ENCODE measurements at regions of chr11 and their contacts with region 1.

Region 1: DNA sequence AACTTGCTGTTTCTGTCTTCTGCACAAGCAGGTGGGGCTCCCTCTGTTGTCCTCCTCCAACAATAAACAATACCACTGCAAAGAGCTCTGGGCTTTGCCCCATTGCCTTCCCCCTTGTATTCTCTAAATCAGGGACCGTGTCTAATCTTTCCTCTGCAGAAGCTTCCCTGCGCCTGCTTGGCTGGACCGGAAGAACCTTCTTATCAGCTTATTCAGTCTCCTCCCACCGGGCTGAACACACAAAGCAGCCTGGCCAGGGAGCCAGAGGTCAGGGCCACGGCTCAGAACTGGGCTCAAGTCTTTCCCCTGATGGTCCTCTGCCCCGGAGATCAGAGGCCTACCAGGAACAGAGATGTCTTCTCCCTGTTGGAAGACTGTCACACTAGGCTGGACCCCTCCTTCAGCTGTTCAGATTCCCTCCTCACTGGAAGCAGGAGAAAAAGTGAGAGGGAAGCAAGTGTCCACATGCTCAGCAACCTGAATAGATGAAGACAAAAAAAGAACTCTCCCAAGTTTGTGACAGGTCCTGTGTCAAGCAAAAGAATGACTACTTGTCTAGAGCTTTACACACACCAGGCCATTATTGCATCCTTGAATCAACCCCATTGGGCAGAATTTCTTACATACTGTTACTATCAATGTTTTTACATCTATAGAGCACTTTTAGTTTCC is 63.7 kb downstream of the RAB30 start:
- DNase-seq: no peak
- H3K4me3 Mint-ChIP-seq: no peak overlapping the region
- H3K27ac Mint-ChIP-seq: no peak overlapping the region
- H3K4me1 Mint-ChIP-seq: peaks cover 57% of the 10 kb centered on the region
- H3K27me3 Mint-ChIP-seq: no peaks in the 10 kb centered on the region

Region 2: GRCh38 chr11:82959987-82960778 is 47.9 kb before region 1 on chr11:
- intact Hi-C with region 1: loop called (anchors 1 kb)
- DNase-seq: peak; percentile 42
- H3K4me3 Mint-ChIP-seq: peak overlapping the region; percentile 68
- H3K27ac Mint-ChIP-seq: peak overlapping the region; percentile 91
- H3K4me1 Mint-ChIP-seq: peaks cover 59% of the 10 kb centered on the region
- H3K27me3 Mint-ChIP-seq: no peaks in the 10 kb centered on the region

Region 3: DNA sequence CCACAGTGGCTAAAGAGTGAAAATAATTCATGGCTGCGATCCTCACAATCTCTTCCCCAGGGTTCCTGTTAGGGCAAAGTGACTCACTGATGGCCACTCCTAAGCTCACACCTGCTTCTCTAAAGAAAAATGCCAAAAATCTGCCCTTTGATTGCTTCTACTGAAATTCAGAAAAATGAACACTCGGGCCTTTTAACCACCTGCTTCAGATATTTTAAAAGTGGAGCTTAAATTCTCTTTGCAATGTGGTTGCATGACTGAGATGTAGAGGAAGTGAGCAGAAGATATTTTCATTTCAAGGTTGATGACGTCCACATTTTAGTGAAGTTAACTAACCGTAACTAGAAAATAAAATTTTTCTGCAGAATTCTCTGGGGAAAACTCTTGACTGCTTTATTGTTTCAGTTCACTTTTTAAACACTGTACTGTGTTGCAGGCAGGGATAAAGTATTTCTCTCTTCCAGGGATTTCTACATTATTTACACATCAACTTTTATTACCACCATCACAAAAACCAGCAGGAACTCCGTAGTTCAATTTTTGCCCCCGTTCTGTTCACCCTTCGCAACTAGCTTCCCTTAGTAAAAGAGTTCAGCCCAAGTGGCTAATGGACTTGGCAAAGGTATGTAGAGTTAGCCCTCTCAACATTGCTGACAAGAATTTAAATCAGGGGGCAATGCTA is 55.2 kb after region 1 on chr11:
- intact Hi-C with region 1: loop called (anchors 2 kb)
- DNase-seq: no peak
- H3K4me3 Mint-ChIP-seq: peak overlapping the region; percentile 74
- H3K27ac Mint-ChIP-seq: peak overlapping the region; percentile 88
- H3K4me1 Mint-ChIP-seq: peaks cover 25% of the 10 kb centered on the region
- H3K27me3 Mint-ChIP-seq: no peaks in the 10 kb centered on the region